Psoas muscle (tissue), 8 donors: ENCODE measurements at regions of chr19 and their contacts with region 1.

Region 1: DNA sequence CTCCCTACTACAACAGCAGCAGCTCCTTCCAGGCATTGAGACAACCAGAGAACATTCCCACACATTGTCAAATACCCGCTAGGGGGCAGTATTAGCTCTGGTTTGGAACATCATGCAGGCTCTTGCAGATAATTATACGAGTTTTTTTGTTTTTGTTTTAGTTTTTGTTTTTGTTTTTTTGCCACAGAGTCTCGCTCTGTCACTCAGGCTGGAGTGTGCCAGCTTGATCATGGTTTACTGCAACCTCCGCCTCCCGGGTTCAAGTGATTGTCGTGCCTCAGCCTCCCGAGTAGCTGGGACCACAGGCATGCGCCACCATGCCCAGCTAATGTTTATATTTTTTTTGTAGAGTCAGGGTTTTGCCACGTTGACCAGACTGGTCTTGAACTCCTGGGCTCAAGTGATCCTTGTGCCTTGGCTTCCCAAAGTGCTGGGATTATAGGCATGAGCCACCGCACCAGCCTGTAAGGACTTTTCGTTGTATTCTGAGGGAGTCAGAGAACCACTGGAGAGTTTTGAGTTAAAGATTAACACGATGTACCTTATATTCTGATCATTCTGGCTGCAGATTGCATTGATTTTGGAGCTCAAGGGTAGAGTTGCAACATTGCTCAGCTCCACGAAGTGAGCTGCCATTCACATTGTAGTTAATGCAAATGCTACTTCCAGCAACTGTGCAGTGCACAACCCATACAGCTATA is 41.7 kb upstream of the CEACAM20 start:
- DNase-seq: no peak
- ATAC-seq: peak; percentile 63 to 73 (median 70)
- H3K4me3 ChIP-seq: no peak overlapping the region
- H3K27ac ChIP-seq: no peak overlapping the region
- H3K4me1 ChIP-seq: no peaks in the 10 kb centered on the region
- H3K27me3 ChIP-seq: peaks cover 0 to 25% (median 4%) of the 10 kb centered on the region in 3 donors
- CTCF ChIP-seq: peak; percentile 80

Region 2: DNA sequence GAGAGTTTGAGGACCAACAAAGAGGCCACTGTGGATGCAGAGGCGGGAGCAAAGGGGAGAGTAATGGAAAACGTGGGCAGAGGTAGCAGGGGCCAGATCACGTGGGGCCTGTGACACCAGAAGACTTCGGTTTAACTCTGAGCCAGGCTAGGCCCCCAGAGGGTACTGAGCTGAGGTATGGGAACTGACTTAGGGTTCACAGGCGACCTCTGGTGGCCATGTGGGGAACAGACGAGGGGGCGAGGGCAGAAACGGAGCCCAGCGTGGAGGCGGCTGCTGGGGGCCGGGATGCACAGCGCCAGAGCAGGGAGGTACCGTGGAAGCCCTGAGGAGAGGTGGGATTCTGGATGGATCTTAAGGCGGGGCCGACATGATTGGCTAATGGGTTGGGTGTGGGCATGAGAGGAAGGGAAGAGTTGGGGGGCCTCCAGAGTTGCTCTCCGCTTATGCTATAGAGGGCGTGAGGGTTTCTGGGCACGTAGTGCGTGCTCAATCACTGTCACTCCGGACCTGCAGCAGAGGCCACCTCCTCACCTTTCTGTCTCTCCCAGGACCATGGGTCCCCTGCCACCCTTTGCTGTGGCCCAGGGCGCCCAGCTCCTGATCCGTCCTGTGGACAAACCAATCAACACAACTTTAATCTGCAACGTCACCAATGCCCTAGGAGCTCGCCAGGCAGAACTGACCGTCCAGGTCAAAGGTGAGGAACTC is 86.2 kb after region 1 on chr19:
- intact Hi-C with region 1: loop called (anchors 2 to 5 kb)
- DNase-seq: peak; percentile 60 to 81
- ATAC-seq: peak; percentile 63 to 79 (median 68)
- H3K4me3 ChIP-seq: no peak overlapping the region
- H3K27ac ChIP-seq: no peak overlapping the region
- H3K4me1 ChIP-seq: peaks cover 5% of the 10 kb centered on the region
- H3K27me3 ChIP-seq: no peaks in the 10 kb centered on the region
- CTCF ChIP-seq: peak; percentile 90